ENCODE measurements at regions of chr3 and their contacts with region 1.

Region 1: GRCh38 chr3:82475306-82475705 is 713.9 kb upstream of the GBE1 start:
- DNase-seq: no peak
- ATAC-seq: no peak
- H3K4me3 Mint-ChIP-seq: no peak overlapping the region
- H3K27ac Mint-ChIP-seq: no peak overlapping the region
- H3K4me1 Mint-ChIP-seq: no peaks in the 10 kb centered on the region
- H3K27me3 Mint-ChIP-seq: no peaks in the 10 kb centered on the region

Region 2: DNA sequence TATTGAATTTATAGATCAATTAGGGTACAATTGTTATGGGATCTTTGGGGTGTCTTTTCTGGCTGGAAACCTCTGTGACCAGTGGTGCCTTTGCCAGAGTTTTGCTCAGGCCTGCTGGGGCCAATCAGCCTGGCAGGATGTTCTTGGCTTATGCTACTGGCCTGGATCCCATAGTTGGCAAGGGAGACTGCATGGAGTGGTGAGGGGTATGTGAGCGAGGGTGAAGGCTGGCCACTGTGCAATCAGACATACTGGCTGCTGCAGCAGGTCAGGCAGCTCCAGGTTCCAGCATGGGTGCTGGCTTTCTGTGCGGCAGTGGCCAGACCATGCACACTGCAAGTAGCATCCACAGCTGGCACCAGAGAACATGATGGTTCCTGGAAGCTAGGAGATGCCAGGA is 339.4 kb after region 1 on chr3:
- CTCF ChIA-PET with region 1: no interaction called
- POLR2A ChIA-PET with region 1: no interaction called
- intact Hi-C with region 1: no loop called
- DNase-seq: no peak
- ATAC-seq: no peak
- H3K4me3 Mint-ChIP-seq: no peak overlapping the region
- H3K27ac Mint-ChIP-seq: no peak overlapping the region
- H3K4me1 Mint-ChIP-seq: no peaks in the 10 kb centered on the region
- H3K27me3 Mint-ChIP-seq: no peaks in the 10 kb centered on the region

Region 3: DNA sequence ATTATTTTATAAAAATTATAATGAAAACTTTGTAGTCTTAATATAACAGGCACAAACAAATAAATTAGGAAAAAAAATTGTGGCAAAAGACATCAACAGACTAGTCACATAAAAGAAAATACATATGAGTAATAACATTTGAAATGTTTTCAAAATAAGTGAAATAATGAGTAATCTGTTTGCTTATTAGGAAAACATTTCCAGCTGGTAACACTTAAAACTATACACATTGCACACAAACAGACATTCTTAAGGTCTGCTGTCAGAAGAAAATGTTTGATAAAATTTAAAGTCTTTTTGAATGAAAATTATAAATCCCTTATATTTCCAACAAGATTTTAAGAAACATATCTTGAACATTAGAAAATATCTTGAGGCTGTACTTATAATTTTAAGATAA is 1157.2 kb after region 1 on chr3:
- CTCF ChIA-PET with region 1: no interaction called
- POLR2A ChIA-PET with region 1: no interaction called
- intact Hi-C with region 1: loop called in 1 of 2 experiments (anchors 10 kb)
- DNase-seq: no peak
- ATAC-seq: no peak
- H3K4me3 Mint-ChIP-seq: no peak overlapping the region
- H3K27ac Mint-ChIP-seq: no peak overlapping the region
- H3K4me1 Mint-ChIP-seq: no peaks in the 10 kb centered on the region
- H3K27me3 Mint-ChIP-seq: no peaks in the 10 kb centered on the region

Measured in activated CD4-positive, alpha-beta T cell treated with anti-CD3 and anti-CD28 coated beads for 36 hours (primary cell).